ENCODE measurements at regions of chr13 and their contacts with region 1.

Region 1: DNA sequence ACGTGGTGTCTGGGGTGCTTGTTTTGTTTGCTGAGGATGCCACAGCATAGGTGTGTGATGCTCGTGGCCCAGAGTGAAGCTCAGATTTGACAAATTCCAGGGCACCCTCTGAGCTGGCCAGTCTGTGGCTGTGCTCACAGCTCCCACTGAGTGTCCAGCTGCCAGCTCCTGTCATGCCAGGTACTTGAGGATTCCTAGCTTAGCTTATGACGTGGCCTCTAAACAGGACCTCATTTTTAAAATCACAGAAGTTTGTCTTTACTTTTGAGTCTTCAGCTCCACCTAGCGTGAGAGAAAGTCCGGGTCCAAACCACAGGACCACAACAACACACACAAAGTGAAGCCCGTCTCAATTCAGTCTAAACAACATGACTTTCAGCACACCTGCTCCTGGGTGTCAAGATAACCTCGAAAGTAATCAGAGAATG is 117.3 kb downstream of the RAB20 start:
- DNase-seq: peak in 2 of 5 donors; percentile 38 to 62
- H3K4me3 ChIP-seq: no peak overlapping the region
- H3K27ac ChIP-seq: peak overlapping the region in 1 of 2 donors; percentile 42
- H3K4me1 ChIP-seq: peaks cover 4% of the 10 kb centered on the region
- H3K27me3 ChIP-seq: no peaks in the 10 kb centered on the region
- CTCF ChIP-seq: peak in 2 of 3 donors; percentile 55 to 59
- EP300 ChIP-seq: no peak
- POLR2A ChIP-seq: no peak

Region 2: DNA sequence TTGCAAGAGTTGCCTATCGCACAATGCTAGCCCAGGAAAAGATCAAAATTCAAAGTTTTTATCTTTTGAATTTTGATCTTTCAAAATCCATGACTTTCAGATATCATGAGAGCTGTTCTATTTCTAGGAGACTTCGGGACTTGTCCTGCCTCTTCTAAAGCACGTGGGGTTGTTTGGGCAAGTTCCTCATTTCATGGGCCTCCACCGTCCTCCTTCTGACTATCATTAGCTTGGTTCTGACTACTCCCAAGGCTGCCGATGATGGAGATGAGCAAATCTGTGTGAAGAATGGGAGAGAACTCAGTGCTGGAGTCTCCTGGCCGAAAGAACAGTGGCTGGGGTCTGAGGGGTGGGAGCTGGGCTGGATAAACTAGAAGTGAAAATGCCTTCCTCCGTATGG is 223.8 kb before region 1 on chr13:
- intact Hi-C with region 1: loop called in 3 of 4 experiments (anchors 2 to 5 kb)
- DNase-seq: no peak
- H3K4me3 ChIP-seq: no peak overlapping the region
- H3K27ac ChIP-seq: peak overlapping the region in 1 of 2 donors; percentile 87
- H3K4me1 ChIP-seq: peaks cover 11% of the 10 kb centered on the region
- H3K27me3 ChIP-seq: no peaks in the 10 kb centered on the region
- CTCF ChIP-seq: no peak
- EP300 ChIP-seq: no peak
- POLR2A ChIP-seq: no peak

Region 3: GRCh38 chr13:110225609-110226562 is 218.4 kb before region 1 on chr13:
- intact Hi-C with region 1: loop called in 3 of 4 experiments (anchors 2 to 5 kb)
- DNase-seq: no peak
- H3K4me3 ChIP-seq: no peak overlapping the region
- H3K27ac ChIP-seq: no peak overlapping the region
- H3K4me1 ChIP-seq: peaks cover 5% of the 10 kb centered on the region
- H3K27me3 ChIP-seq: no peaks in the 10 kb centered on the region
- CTCF ChIP-seq: no peak
- EP300 ChIP-seq: no peak
- POLR2A ChIP-seq: no peak

Region 4: GRCh38 chr13:110634558-110634957 is 190.3 kb after region 1 on chr13:
- intact Hi-C with region 1: no loop called
- DNase-seq: no peak
- H3K4me3 ChIP-seq: no peak overlapping the region
- H3K27ac ChIP-seq: no peak overlapping the region
- H3K4me1 ChIP-seq: peaks cover 5% of the 10 kb centered on the region
- H3K27me3 ChIP-seq: no peaks in the 10 kb centered on the region
- CTCF ChIP-seq: no peak
- EP300 ChIP-seq: no peak
- POLR2A ChIP-seq: no peak